ENCODE measurements at regions of chr6 and their contacts with region 1.

Region 1: DNA sequence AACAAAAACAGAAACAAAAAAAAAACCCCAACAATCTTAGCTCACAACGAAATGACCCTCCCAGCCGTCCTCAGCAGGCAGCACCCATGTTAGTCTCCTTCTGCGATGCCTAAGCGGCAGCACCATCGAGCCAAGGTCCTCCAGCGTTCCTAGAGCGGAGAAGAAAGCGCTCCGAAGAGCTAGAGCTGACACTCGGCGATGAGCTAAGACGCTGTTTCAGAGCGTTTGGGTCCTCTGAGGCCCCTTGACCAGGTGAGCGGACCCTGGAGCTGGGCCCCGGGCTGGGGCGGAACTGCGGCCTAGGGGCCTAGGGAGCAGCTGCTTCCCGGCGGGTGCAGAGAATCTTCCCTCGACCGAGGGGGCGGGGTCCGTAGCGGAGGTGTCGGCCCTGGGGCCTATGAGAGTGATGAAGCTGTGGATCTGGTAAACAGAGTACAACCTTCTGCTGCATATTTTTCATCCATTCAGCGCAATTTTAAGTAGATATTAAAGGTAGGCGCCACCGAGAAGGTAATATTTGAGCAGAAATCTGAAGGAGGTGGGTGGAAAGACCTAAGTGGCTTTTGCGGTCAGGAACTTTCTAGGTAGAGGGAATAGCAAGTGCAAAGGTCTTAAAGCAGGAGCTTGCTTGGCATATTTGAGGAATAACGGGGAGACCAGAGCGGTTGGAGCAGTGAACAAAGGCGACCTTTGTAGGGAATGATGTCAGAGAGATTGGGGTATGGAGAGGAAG is at the start of gene ZSCAN26:
- DNase-seq: peak; percentile 55 to 91 (median 83)
- H3K4me3 ChIP-seq: peak within 1 kb of the TSS; percentile 90
- H3K4me3 Mint-ChIP-seq: no peak within 1 kb of the TSS
- H3K27ac ChIP-seq: peak within 1 kb of the TSS; percentile 81
- H3K27ac Mint-ChIP-seq: no peak within 1 kb of the TSS
- H3K4me1 ChIP-seq: peaks cover 18% of the 10 kb centered on the region
- H3K4me1 Mint-ChIP-seq: peaks cover 14 to 20% (median 17%) of the 10 kb centered on the region in 3 donors
- H3K27me3 ChIP-seq: no peaks in the 10 kb centered on the region
- H3K27me3 Mint-ChIP-seq: peaks cover 0 to 4% of the 10 kb centered on the region in 2 donors
- total RNA-seq, gene ZSCAN26: 5.6 to 6.4 TPM

Region 2: DNA sequence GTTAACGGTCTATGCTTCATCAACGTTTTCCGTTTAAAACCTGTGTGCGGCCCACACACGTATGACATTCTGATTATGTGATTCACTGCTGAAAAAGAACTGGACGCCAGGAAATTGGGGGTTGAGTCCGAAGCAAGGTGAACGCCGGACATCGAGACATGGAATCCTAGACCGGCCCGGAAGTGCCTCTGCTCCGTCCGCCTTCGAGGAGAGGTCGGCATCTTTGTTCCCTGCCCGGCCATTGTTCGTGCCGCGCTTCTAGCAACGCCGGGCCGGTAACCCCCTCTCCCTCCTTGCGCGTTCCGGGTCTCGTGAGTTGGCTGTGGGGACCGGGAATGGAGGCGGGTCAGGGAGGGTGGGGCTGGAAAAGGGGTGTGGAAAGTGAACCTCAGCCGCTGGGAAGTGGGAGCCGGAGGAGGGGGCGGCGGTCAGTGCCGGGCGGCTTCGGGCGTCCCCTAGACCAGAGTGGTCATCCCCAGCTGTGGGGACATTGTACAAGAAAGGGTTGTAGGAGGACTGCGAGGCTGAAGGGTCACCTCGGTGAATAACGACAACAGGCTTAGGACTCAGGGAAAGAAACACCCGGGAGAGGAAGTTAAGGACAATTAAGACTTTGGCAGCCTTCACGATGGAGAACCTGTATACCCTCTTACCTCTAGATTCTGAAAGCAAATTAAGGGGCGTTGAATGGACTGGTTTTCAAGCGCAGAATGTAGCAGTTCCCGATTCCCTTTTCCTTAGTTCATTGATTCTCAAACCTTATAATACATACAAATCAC is 41.9 kb before region 1 on chr6 and contains the start of gene ZSCAN9:
- CTCF ChIA-PET with region 1: no interaction called
- POLR2A ChIA-PET with region 1: no interaction called
- DNase-seq: peak in 3 of 5 donors; percentile 19 to 62 (median 43)
- H3K4me3 ChIP-seq: peak within 1 kb of the TSS; percentile 61
- H3K4me3 Mint-ChIP-seq: peak within 1 kb of the TSS; percentile 91 to 99 (median 95)
- H3K27ac ChIP-seq: peak within 1 kb of the TSS; percentile 56
- H3K27ac Mint-ChIP-seq: peak within 1 kb of the TSS in 7 of 8 donors; percentile 69 to 94 (median 88)
- H3K4me1 ChIP-seq: no peaks in the 10 kb centered on the region
- H3K4me1 Mint-ChIP-seq: peaks cover 22 to 27% (median 22%) of the 10 kb centered on the region in 3 donors
- H3K27me3 ChIP-seq: peaks cover 12% of the 10 kb centered on the region
- H3K27me3 Mint-ChIP-seq: peaks cover 27 to 34% of the 10 kb centered on the region in 2 donors
- total RNA-seq, gene ZSCAN9: 5.0 to 6.8 TPM

Region 3: GRCh38 chr6:28252009-28252975 is 14.8 kb before region 1 on chr6 and contains the start of gene ZKSCAN4:
- CTCF ChIA-PET with region 1: interaction called, 11 read pairs
- POLR2A ChIA-PET with region 1: interaction called, 18 read pairs
- DNase-seq: peak; percentile 59 to 81 (median 78)
- H3K4me3 ChIP-seq: peak within 1 kb of the TSS; percentile 100
- H3K4me3 Mint-ChIP-seq: peak within 1 kb of the TSS; percentile 96 to 100 (median 98)
- H3K27ac ChIP-seq: peak within 1 kb of the TSS; percentile 65
- H3K27ac Mint-ChIP-seq: peak within 1 kb of the TSS; percentile 72 to 98 (median 94)
- H3K4me1 ChIP-seq: peaks cover 25% of the 10 kb centered on the region
- H3K4me1 Mint-ChIP-seq: peaks cover 31 to 53% (median 45%) of the 10 kb centered on the region in 3 donors
- H3K27me3 ChIP-seq: no peaks in the 10 kb centered on the region
- H3K27me3 Mint-ChIP-seq: peaks cover 2 to 4% of the 10 kb centered on the region in 2 donors
- total RNA-seq, gene ZKSCAN4: 5.6 to 6.3 TPM

Region 4: GRCh38 chr6:28281288-28282064 is 14.3 kb after region 1 on chr6 and contains the start of gene PGBD1:
- CTCF ChIA-PET with region 1: interaction called, 3 read pairs
- POLR2A ChIA-PET with region 1: interaction called, 10 read pairs
- DNase-seq: peak; percentile 10 to 64 (median 32)
- H3K4me3 ChIP-seq: peak within 1 kb of the TSS; percentile 48
- H3K4me3 Mint-ChIP-seq: peak within 1 kb of the TSS; percentile 77 to 91 (median 78)
- H3K27ac ChIP-seq: peak within 1 kb of the TSS; percentile 33
- H3K27ac Mint-ChIP-seq: peak within 1 kb of the TSS in 3 of 8 donors; percentile 33 to 61 (median 52)
- H3K4me1 ChIP-seq: peaks cover 7% of the 10 kb centered on the region
- H3K4me1 Mint-ChIP-seq: peaks cover 10 to 15% (median 12%) of the 10 kb centered on the region in 3 donors
- H3K27me3 ChIP-seq: no peaks in the 10 kb centered on the region
- H3K27me3 Mint-ChIP-seq: peaks cover 9 to 10% of the 10 kb centered on the region in 2 donors
- total RNA-seq, gene PGBD1: 4.6 to 5.4 TPM

Region 5: DNA sequence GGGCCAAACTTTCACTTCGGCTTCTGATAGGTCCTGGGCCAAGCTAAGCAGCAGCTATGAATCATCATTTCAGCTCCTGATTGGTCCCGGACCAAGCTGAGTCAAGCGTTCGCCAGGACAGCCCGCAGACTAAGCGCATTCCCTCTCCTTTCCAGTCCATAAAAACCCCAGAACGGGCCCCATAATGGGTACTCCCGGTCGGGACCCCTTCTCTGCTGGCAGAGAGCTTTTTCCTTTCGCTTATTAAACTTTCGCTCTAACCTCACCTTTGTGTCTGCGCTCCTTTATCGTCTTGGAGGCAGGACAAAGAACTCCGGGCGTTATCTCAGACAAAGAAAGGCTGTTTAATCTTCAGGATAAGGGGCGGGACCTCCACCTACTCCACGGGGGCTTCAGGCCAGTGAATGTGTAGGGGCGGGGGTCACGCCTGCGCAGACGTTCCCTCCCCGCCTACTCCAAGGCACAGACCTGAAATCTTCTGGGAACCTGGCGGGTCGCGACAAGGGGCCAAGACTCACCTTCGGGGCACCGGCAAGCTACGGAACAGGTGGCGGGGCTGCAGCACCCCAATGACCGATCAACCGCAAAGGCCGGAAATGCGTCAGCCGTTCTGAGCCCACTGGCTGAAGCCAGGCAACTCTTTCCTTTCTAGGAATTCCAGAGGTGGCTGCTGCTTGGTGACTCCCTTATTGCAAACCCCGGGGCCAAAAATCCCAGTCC is 68.6 kb after region 1 on chr6 and contains the start of gene ZSCAN31:
- CTCF ChIA-PET with region 1: no interaction called
- POLR2A ChIA-PET with region 1: interaction called, 14 read pairs
- DNase-seq: peak; percentile 73 to 92 (median 79)
- H3K4me3 ChIP-seq: peak within 1 kb of the TSS; percentile 80
- H3K4me3 Mint-ChIP-seq: no peak within 1 kb of the TSS
- H3K27ac ChIP-seq: peak within 1 kb of the TSS; percentile 96
- H3K27ac Mint-ChIP-seq: no peak within 1 kb of the TSS
- H3K4me1 ChIP-seq: peaks cover 21% of the 10 kb centered on the region
- H3K4me1 Mint-ChIP-seq: peaks cover 1 to 8% (median 5%) of the 10 kb centered on the region in 3 donors
- H3K27me3 ChIP-seq: no peaks in the 10 kb centered on the region
- H3K27me3 Mint-ChIP-seq: peaks cover 0 to 3% of the 10 kb centered on the region in 2 donors
- total RNA-seq, gene ZSCAN31: 1.1 to 2.6 TPM

Region 6: DNA sequence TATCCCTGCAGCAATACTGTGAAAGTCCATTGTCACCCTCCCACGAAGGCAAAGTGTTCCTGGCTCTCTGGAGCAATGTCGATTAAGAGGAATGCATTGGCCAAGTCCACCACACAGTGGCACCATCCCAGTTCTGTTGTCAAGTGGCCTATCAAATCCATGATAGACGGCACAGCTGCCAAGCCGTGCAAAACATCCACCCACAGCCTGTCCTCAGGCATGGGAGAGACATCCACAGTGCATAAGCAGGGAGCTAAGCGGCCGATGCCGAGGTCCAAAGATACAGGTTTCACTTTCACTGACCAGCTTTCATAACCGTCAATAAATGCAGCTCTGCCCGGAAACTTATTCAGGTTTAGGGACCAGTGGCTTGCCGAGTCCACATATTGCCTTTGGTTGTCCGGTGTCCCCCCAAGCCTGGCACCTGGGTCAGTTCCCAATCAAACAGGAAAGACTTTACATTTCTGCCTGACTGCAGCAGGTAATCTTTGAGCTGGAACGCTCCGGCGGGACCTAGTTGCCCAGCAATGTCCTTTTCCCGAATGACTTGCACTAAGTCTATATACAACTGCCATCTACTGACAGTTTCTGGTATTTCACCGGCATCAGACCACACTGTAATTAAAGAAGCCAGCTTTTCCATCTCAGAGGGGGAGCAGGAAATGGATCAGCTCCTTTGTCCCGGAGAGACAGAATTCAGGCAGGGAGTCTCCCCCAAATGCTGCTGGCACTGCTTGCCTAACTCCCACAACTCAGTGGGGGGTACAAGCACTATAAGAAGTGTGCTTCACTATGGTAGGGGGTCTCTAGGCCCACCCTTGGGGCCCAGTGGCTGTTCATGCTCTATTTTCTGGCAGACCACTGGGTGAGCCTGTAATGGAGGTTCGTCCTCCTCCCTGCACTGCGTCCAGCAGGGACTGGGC is 88.9 kb after region 1 on chr6:
- CTCF ChIA-PET with region 1: interaction called, 22 read pairs
- POLR2A ChIA-PET with region 1: no interaction called
- DNase-seq: peak; percentile 34 to 70 (median 58)
- H3K4me3 ChIP-seq: peak overlapping the region; percentile 75
- H3K4me3 Mint-ChIP-seq: peak overlapping the region; percentile 74 to 95 (median 90)
- H3K27ac ChIP-seq: peak overlapping the region; percentile 49
- H3K27ac Mint-ChIP-seq: peak overlapping the region in 7 of 8 donors; percentile 51 to 95 (median 86)
- H3K4me1 ChIP-seq: peaks cover 18% of the 10 kb centered on the region
- H3K4me1 Mint-ChIP-seq: peaks cover 24 to 40% (median 30%) of the 10 kb centered on the region in 3 donors
- H3K27me3 ChIP-seq: no peaks in the 10 kb centered on the region
- H3K27me3 Mint-ChIP-seq: no peaks in the 10 kb centered on the region

Measured in CD8-positive, alpha-beta memory T cell (primary cell).